ENCODE measurements at regions of chr4 and their contacts with region 1.

Region 1: GRCh38 chr4:152679414-152680281 is at the start of gene TMEM154:
- DNase-seq: peak; percentile 66
- ATAC-seq: peak; percentile 83
- H3K4me3 Mint-ChIP-seq: peak within 1 kb of the TSS; percentile 95
- H3K27ac Mint-ChIP-seq: peak within 1 kb of the TSS; percentile 96
- H3K4me1 Mint-ChIP-seq: peaks cover 84% of the 10 kb centered on the region
- H3K27me3 Mint-ChIP-seq: no peaks in the 10 kb centered on the region
- CTCF ChIP-seq: no peak
- total RNA-seq, gene TMEM154: 47.5 and 59.9 TPM in 2 replicates

Region 2: GRCh38 chr4:152424977-152425376 is 254.7 kb before region 1 on chr4:
- CTCF ChIA-PET with region 1: no interaction called
- POLR2A ChIA-PET with region 1: no interaction called
- intact Hi-C with region 1: no loop called
- DNase-seq: no peak
- ATAC-seq: no peak
- H3K4me3 Mint-ChIP-seq: no peak overlapping the region
- H3K27ac Mint-ChIP-seq: no peak overlapping the region
- H3K4me1 Mint-ChIP-seq: peaks cover 22% of the 10 kb centered on the region
- H3K27me3 Mint-ChIP-seq: no peaks in the 10 kb centered on the region
- CTCF ChIP-seq: no peak

Region 3: DNA sequence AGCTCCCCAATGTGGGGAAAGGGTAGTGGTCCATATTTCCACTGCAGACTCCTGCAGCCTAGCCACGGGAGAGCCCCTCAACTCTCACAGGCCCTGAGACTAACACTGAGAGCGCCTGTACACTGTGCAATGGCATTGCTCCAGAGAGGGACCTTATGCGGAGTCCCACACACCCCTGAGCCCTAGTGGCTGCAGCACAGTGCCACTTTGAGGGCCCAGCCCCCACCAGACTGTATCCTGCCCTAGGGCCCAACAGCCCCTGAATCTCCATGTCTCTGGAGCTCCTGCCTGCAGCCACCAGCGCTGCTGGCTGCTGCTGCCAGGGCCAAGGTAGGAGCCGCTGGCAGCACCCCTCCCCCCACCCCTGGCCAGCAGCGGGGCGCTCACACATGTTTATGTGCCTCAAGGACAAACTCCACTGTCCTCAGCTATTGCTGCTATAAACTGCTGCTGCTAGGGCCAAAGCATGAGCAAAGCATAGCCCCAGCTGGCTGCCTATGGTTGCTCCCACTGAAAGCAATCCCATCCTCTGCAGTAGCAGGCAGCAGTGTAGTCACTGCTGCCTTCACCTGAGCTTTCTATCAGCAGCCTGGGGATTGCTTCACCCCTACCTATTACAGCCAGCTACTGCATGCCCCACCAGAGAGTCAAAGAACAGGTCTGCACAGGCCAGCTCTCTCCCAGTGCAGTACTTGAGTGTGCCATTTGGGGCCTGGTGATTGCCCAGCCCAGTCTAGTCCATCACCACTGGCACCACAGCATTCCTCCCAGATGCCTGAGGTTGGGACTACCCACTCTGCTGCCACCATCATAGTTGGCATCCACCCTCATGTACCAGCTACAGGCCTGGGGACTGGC is 24.1 kb before region 1 on chr4:
- CTCF ChIA-PET with region 1: interaction called, 3 read pairs
- POLR2A ChIA-PET with region 1: interaction called, 152 read pairs
- intact Hi-C with region 1: no loop called
- DNase-seq: no peak
- ATAC-seq: no peak
- H3K4me3 Mint-ChIP-seq: peak overlapping the region; percentile 3
- H3K27ac Mint-ChIP-seq: peak overlapping the region; percentile 59
- H3K4me1 Mint-ChIP-seq: peaks cover 47% of the 10 kb centered on the region
- H3K27me3 Mint-ChIP-seq: no peaks in the 10 kb centered on the region
- CTCF ChIP-seq: no peak

Region 4: DNA sequence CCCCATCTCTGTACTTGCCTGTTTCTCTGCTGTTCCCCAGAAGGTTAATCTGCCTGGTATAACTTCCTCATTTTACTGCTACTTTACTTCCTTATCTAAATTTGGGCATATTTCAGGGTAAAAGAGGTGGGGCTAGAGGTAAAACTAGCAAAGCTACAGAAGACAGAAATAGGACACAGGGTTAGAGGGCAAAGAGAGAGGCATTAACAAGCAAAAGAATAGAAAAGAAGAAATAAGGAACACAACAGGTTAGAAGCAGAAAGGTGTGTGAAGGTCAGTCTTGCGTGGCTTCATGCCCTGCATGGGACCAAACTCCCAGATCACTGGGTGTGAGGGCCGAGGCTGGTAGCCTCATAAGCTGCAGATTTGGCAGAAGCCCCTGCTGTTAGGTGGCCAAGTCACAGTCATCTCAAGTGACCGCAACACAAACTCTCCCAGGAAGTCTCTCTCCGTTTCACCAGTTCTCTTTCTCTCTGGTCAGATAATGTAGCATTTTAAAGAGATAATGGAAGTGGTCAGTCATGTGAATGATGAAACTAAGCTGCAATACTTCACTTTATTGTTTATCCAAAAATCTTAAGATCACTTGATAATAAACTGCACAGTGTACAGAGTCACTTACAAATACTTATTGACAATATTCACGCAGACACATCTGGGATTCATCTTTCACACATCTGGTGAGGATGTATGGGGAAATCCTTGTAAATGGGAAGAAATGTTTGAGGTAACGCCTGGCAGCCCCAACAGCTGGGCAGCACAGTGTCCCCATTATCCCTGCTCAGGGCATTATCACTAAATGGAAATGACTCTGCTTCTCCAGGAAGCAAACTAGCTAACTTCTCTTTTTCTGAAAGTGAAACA is 16.2 kb before region 1 on chr4:
- CTCF ChIA-PET with region 1: interaction called, 6 read pairs
- POLR2A ChIA-PET with region 1: interaction called, 152 read pairs
- intact Hi-C with region 1: loop called (anchors 1 kb)
- DNase-seq: no peak
- ATAC-seq: peak; percentile 73
- H3K4me3 Mint-ChIP-seq: peak overlapping the region; percentile 77
- H3K27ac Mint-ChIP-seq: peak overlapping the region; percentile 93
- H3K4me1 Mint-ChIP-seq: peaks cover 94% of the 10 kb centered on the region
- H3K27me3 Mint-ChIP-seq: no peaks in the 10 kb centered on the region
- CTCF ChIP-seq: no peak

Region 5: GRCh38 chr4:152696764-152697261 is 17.2 kb after region 1 on chr4:
- CTCF ChIA-PET with region 1: interaction called, 3 read pairs
- POLR2A ChIA-PET with region 1: interaction called, 8 read pairs
- intact Hi-C with region 1: loop called (anchors 1 kb)
- DNase-seq: no peak
- ATAC-seq: peak; percentile 95
- H3K4me3 Mint-ChIP-seq: peak overlapping the region; percentile 6
- H3K27ac Mint-ChIP-seq: peak overlapping the region; percentile 60
- H3K4me1 Mint-ChIP-seq: peaks cover 40% of the 10 kb centered on the region
- H3K27me3 Mint-ChIP-seq: peaks cover 1% of the 10 kb centered on the region
- CTCF ChIP-seq: no peak

Region 6: GRCh38 chr4:152709683-152710438 is 30.2 kb after region 1 on chr4:
- CTCF ChIA-PET with region 1: no interaction called
- POLR2A ChIA-PET with region 1: no interaction called
- intact Hi-C with region 1: loop called (anchors 5 kb)
- DNase-seq: no peak
- ATAC-seq: peak; percentile 49
- H3K4me3 Mint-ChIP-seq: no peak overlapping the region
- H3K27ac Mint-ChIP-seq: no peak overlapping the region
- H3K4me1 Mint-ChIP-seq: peaks cover 23% of the 10 kb centered on the region
- H3K27me3 Mint-ChIP-seq: no peaks in the 10 kb centered on the region
- CTCF ChIP-seq: no peak

Region 7: GRCh38 chr4:152735396-152735859 is 55.8 kb after region 1 on chr4:
- CTCF ChIA-PET with region 1: interaction called, 27 read pairs
- POLR2A ChIA-PET with region 1: interaction called, 5 read pairs
- intact Hi-C with region 1: loop called (anchors 1 kb)
- DNase-seq: no peak
- ATAC-seq: no peak
- H3K4me3 Mint-ChIP-seq: no peak overlapping the region
- H3K27ac Mint-ChIP-seq: no peak overlapping the region
- H3K4me1 Mint-ChIP-seq: peaks cover 14% of the 10 kb centered on the region
- H3K27me3 Mint-ChIP-seq: peaks cover 2% of the 10 kb centered on the region
- CTCF ChIP-seq: peak; percentile 24

Region 8: GRCh38 chr4:153137159-153137558 is 457.5 kb after region 1 on chr4:
- CTCF ChIA-PET with region 1: no interaction called
- POLR2A ChIA-PET with region 1: no interaction called
- intact Hi-C with region 1: loop called (anchors 10 kb)
- DNase-seq: no peak
- ATAC-seq: no peak
- H3K4me3 Mint-ChIP-seq: no peak overlapping the region
- H3K27ac Mint-ChIP-seq: no peak overlapping the region
- H3K4me1 Mint-ChIP-seq: peaks cover 31% of the 10 kb centered on the region
- H3K27me3 Mint-ChIP-seq: peaks cover 28% of the 10 kb centered on the region
- CTCF ChIP-seq: no peak

Region 9: GRCh38 chr4:153976954-153977353 is 1297.3 kb after region 1 on chr4:
- CTCF ChIA-PET with region 1: no interaction called
- POLR2A ChIA-PET with region 1: no interaction called
- intact Hi-C with region 1: no loop called
- DNase-seq: no peak
- ATAC-seq: no peak
- H3K4me3 Mint-ChIP-seq: no peak overlapping the region
- H3K27ac Mint-ChIP-seq: no peak overlapping the region
- H3K4me1 Mint-ChIP-seq: no peaks in the 10 kb centered on the region
- H3K27me3 Mint-ChIP-seq: no peaks in the 10 kb centered on the region
- CTCF ChIP-seq: no peak

Measured in activated B cell treated with CpG ODN at 0.5 μM for 24 hours (primary cell).